ENCODE measurements at regions of chr6 and their contacts with region 1.

Region 1: DNA sequence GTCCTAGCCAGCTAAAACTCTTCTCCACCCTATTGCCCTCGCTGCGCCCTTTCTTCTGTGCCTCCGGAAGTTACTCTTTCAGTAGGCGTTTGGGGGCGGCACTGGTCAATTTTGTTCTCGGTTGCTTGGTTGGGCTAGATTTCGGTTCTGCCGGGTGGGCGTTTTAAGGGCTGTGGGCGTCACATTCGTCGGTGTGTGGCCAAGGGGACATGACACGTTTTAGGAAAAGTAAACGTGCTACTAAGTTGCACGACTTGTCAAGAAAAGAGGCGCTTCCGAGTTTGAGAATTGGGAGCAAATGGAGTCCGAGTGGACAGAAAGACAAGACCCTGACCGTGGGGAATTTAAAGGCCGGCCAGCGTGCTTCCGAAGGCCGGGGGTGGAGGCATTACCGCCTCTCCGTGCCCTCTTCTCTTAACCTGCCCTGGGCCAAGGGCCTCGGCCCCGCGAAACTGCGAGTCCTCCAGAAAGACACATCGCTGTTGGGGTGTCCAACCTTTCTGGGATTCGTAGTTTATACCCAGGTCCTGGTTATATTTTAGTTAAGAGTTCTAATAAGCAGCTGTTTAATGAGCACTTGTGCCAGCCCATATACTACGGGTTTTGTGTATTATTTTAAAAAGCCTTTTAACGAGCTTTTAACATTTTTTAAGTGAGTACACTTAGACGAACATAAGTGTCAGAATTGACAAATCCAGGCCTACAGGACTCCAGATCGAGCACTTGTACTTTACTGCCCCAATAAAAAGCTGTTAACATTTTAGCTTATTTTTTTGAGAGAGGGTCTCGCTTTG is 661 bp upstream of the BAG6 start:
- DNase-seq: peak in 4 of 14 experiments; percentile 14 to 93 (median 80)
- ATAC-seq: peak; percentile 70
- H3K4me3 ChIP-seq: peak overlapping the region; percentile 63
- H3K4me3 Mint-ChIP-seq: peak overlapping the region; percentile 97
- H3K27ac ChIP-seq: peak overlapping the region; percentile 99
- H3K27ac Mint-ChIP-seq: peak overlapping the region; percentile 98
- H3K4me1 ChIP-seq: peaks cover 46% of the 10 kb centered on the region
- H3K4me1 Mint-ChIP-seq: peaks cover 65% of the 10 kb centered on the region
- H3K27me3 ChIP-seq: no peaks in the 10 kb centered on the region
- H3K27me3 Mint-ChIP-seq: no peaks in the 10 kb centered on the region
- CTCF ChIP-seq: no peak

Region 2: GRCh38 chr6:31546962-31547726 is 106.0 kb before region 1 on chr6 and contains the start of gene NFKBIL1:
- CTCF ChIA-PET with region 1: no interaction called
- POLR2A ChIA-PET with region 1: interaction called, 29 read pairs
- intact Hi-C with region 1: loop called in 1 of 2 experiments (anchors 5 kb)
- DNase-seq: peak; percentile 74 to 95 (median 84)
- ATAC-seq: peak; percentile 78
- H3K4me3 ChIP-seq: peak within 1 kb of the TSS; percentile 62
- H3K4me3 Mint-ChIP-seq: peak within 1 kb of the TSS; percentile 86
- H3K27ac ChIP-seq: peak within 1 kb of the TSS; percentile 72 to 89
- H3K27ac Mint-ChIP-seq: peak within 1 kb of the TSS; percentile 84
- H3K4me1 ChIP-seq: peaks cover 47% of the 10 kb centered on the region
- H3K4me1 Mint-ChIP-seq: peaks cover 41% of the 10 kb centered on the region
- H3K27me3 ChIP-seq: no peaks in the 10 kb centered on the region
- H3K27me3 Mint-ChIP-seq: no peaks in the 10 kb centered on the region
- CTCF ChIP-seq: peak; percentile 21
- total RNA-seq, gene NFKBIL1: 7.6 to 9.3 TPM

Region 3: GRCh38 chr6:31619805-31620585 is 33.1 kb before region 1 on chr6:
- CTCF ChIA-PET with region 1: interaction called, 8 read pairs
- POLR2A ChIA-PET with region 1: interaction called, 46 read pairs
- intact Hi-C with region 1: loop called (anchors 1 kb)
- DNase-seq: peak; percentile 86 to 99 (median 95)
- ATAC-seq: peak; percentile 79
- H3K4me3 ChIP-seq: peak overlapping the region; percentile 74
- H3K4me3 Mint-ChIP-seq: peak overlapping the region; percentile 92
- H3K27ac ChIP-seq: peak overlapping the region; percentile 97 to 99
- H3K27ac Mint-ChIP-seq: peak overlapping the region; percentile 92
- H3K4me1 ChIP-seq: peaks cover 46% of the 10 kb centered on the region
- H3K4me1 Mint-ChIP-seq: peaks cover 52% of the 10 kb centered on the region
- H3K27me3 ChIP-seq: no peaks in the 10 kb centered on the region
- H3K27me3 Mint-ChIP-seq: no peaks in the 10 kb centered on the region
- CTCF ChIP-seq: no peak

Region 4: DNA sequence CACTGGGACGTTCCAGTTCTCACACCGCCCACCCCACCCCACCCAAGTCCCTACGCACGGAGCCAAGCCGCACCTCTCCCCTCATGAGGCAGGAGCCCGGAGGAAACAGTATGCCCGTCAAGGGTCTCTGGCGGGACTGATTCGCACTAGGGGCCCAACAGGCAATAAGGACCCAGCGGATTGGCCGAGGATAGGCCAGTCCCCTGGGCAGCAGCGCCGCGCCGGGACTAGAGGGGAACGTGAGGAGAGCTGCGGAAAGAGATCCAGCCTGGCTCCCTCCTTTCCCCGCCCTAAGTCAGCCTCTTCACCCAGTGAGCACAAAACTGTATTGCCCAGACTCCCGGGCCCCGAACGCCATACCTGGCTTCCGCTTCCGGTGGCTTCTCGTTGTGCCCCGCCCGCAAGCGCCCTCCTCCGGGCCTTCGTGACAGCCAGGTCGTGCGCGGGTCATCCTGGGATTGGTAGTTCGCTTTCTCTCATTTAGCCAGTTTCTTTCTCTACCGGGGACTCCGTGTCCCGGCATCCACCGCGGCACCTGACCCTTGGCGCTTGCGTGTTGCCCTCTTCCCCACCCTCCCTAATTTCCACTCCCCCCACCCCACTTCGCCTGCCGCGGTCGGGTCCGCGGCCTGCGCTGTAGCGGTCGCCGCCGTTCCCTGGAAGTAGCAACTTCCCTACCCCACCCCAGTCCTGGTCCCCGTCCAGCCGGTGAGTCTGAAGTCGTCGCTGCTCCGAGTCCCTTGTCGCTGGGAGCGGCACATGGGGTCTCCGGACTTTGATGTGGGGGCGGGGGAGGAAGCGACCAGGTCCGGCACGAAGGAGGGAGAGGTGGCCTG is 12.6 kb after region 1 on chr6 and contains the start of gene CSNK2B:
- CTCF ChIA-PET with region 1: interaction called, 9 read pairs
- POLR2A ChIA-PET with region 1: interaction called, 250 read pairs
- intact Hi-C with region 1: loop called (anchors 1 kb)
- DNase-seq: peak; percentile 94 to 99 (median 97)
- ATAC-seq: peak; percentile 85
- H3K4me3 ChIP-seq: peak within 1 kb of the TSS; percentile 79
- H3K4me3 Mint-ChIP-seq: peak within 1 kb of the TSS; percentile 95
- H3K27ac ChIP-seq: peak within 1 kb of the TSS; percentile 93 to 96
- H3K27ac Mint-ChIP-seq: peak within 1 kb of the TSS; percentile 97
- H3K4me1 ChIP-seq: peaks cover 61% of the 10 kb centered on the region
- H3K4me1 Mint-ChIP-seq: peaks cover 51% of the 10 kb centered on the region
- H3K27me3 ChIP-seq: no peaks in the 10 kb centered on the region
- H3K27me3 Mint-ChIP-seq: no peaks in the 10 kb centered on the region
- CTCF ChIP-seq: no peak
- total RNA-seq, gene CSNK2B: 88.0 to 92.6 TPM

Region 5: GRCh38 chr6:31739639-31740396 is 86.7 kb after region 1 on chr6 and contains the start of gene MSH5:
- CTCF ChIA-PET with region 1: interaction called, 3 read pairs
- POLR2A ChIA-PET with region 1: interaction called, 10 read pairs
- intact Hi-C with region 1: no loop called
- DNase-seq: peak; percentile 85 to 98 (median 93)
- ATAC-seq: peak; percentile 85
- H3K4me3 ChIP-seq: peak within 1 kb of the TSS; percentile 87
- H3K4me3 Mint-ChIP-seq: peak within 1 kb of the TSS; percentile 90
- H3K27ac ChIP-seq: peak within 1 kb of the TSS; percentile 38 to 58
- H3K27ac Mint-ChIP-seq: peak within 1 kb of the TSS; percentile 85
- H3K4me1 ChIP-seq: peaks cover 53% of the 10 kb centered on the region
- H3K4me1 Mint-ChIP-seq: peaks cover 61% of the 10 kb centered on the region
- H3K27me3 ChIP-seq: no peaks in the 10 kb centered on the region
- H3K27me3 Mint-ChIP-seq: no peaks in the 10 kb centered on the region
- CTCF ChIP-seq: no peak
- total RNA-seq, gene MSH5: 13.6 to 13.7 TPM

Region 6: DNA sequence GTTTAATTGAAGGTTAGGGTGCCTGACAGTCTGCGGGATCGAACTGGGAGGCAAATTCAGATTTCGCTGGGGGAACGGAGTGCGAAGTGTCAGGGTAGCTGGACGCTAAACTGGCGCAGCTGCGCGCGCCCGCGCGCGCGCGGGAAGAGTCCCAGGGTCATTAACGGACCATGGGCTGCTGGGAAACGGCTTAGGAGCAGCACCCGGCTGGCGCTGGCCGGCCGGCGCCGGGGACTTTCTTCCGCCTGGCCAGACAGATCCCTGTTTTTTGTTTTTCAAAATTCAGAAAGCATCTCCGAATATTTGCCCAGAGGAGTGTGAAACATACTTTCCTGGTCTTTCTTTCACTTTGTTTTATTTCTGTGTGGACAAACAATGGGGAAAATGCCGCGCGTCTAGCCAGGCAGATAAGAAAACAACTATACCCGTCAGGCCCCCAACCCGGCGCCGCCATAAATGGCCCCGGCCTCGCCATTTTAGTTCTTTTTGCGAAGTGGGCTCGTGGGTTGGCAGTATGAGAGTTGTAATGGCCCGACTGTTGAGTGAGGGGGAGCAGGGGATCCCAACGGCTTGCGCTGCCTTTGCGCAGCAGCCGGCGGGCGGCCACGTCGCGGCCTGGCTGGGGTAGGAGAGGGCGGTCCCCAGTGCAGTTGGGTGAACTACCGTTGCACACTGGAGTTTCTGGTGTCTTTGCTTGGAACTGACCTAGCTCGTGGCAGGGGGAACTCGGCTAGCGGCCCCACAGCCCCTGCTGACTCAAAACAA is 181.5 kb after region 1 on chr6:
- CTCF ChIA-PET with region 1: interaction called, 5 read pairs
- POLR2A ChIA-PET with region 1: interaction called, 13 read pairs
- intact Hi-C with region 1: loop called in 1 of 2 experiments (anchors 2 kb)
- DNase-seq: peak; percentile 72 to 89 (median 78)
- ATAC-seq: peak; percentile 71
- H3K4me3 ChIP-seq: peak overlapping the region; percentile 94
- H3K4me3 Mint-ChIP-seq: peak overlapping the region; percentile 96
- H3K27ac ChIP-seq: peak overlapping the region; percentile 97 to 98
- H3K27ac Mint-ChIP-seq: peak overlapping the region; percentile 98
- H3K4me1 ChIP-seq: peaks cover 66% of the 10 kb centered on the region
- H3K4me1 Mint-ChIP-seq: peaks cover 60% of the 10 kb centered on the region
- H3K27me3 ChIP-seq: no peaks in the 10 kb centered on the region
- H3K27me3 Mint-ChIP-seq: no peaks in the 10 kb centered on the region
- CTCF ChIP-seq: no peak

Region 7: GRCh38 chr6:31901953-31902643 is 249.0 kb after region 1 on chr6 and contains the start of gene ZBTB12:
- CTCF ChIA-PET with region 1: no interaction called
- POLR2A ChIA-PET with region 1: interaction called, 18 read pairs
- intact Hi-C with region 1: no loop called
- DNase-seq: peak; percentile 67 to 94 (median 84)
- ATAC-seq: peak; percentile 48
- H3K4me3 ChIP-seq: peak within 1 kb of the TSS; percentile 68
- H3K4me3 Mint-ChIP-seq: peak within 1 kb of the TSS; percentile 89
- H3K27ac ChIP-seq: peak within 1 kb of the TSS; percentile 13 to 72
- H3K27ac Mint-ChIP-seq: peak within 1 kb of the TSS; percentile 65
- H3K4me1 ChIP-seq: peaks cover 39% of the 10 kb centered on the region
- H3K4me1 Mint-ChIP-seq: peaks cover 35% of the 10 kb centered on the region
- H3K27me3 ChIP-seq: no peaks in the 10 kb centered on the region
- H3K27me3 Mint-ChIP-seq: no peaks in the 10 kb centered on the region
- CTCF ChIP-seq: no peak
- total RNA-seq, gene ZBTB12: 0.28 to 0.33 TPM